ENCODE measurements at regions of chr17 and their contacts with region 1.

Region 1: GRCh38 chr17:2266045-2266864 is 37.3 kb downstream of the SMG6 start:
- DNase-seq: peak in 1 of 2 donors; percentile 27
- H3K4me3 ChIP-seq: no peak overlapping the region
- H3K27ac ChIP-seq: peak overlapping the region in 1 of 2 donors; percentile 43
- H3K4me1 ChIP-seq: peaks cover 0 to 5% of the 10 kb centered on the region in 2 donors
- H3K27me3 ChIP-seq: no peaks in the 10 kb centered on the region
- CTCF ChIP-seq: no peak
- POLR2A ChIP-seq: no peak

Region 2: GRCh38 chr17:3754458-3755334 is 1488.4 kb after region 1 on chr17:
- intact Hi-C with region 1: loop called (anchors 5 kb)
- DNase-seq: peak; percentile 95 to 96
- H3K4me3 ChIP-seq: peak overlapping the region in 2 of 3 donors; percentile 66 to 68
- H3K27ac ChIP-seq: peak overlapping the region; percentile 85 to 86
- H3K4me1 ChIP-seq: no peaks in the 10 kb centered on the region
- H3K27me3 ChIP-seq: no peaks in the 10 kb centered on the region
- CTCF ChIP-seq: no peak
- POLR2A ChIP-seq: no peak